Activated T-helper 2 cell treated with anti-CD3 and anti-CD28 coated beads, Interferon-gamma antibody, Interleukin-2, Interleukin-4, amounts not matched to agents 10 μg/mL and 5 μg/mL and 100 μg/mL, durations not matched to agents 14 hours and 24 hours and 36 hours (primary cell): ENCODE measurements at regions of chr3 and their contacts with region 1.

Region 1: GRCh38 chr3:119240591-119241434 is at the start of gene B4GALT4:
- DNase-seq: peak; percentile 74
- H3K4me3 Mint-ChIP-seq: peak within 1 kb of the TSS; percentile 84
- H3K27ac Mint-ChIP-seq: peak within 1 kb of the TSS; percentile 85
- H3K4me1 Mint-ChIP-seq: peaks cover 27% of the 10 kb centered on the region
- H3K27me3 Mint-ChIP-seq: no peaks in the 10 kb centered on the region
- total RNA-seq, gene B4GALT4: 17.2 and 20.1 TPM in 2 replicates

Region 2: GRCh38 chr3:119034256-119035013 is 206.4 kb before region 1 on chr3 and contains the start of gene IGSF11:
- intact Hi-C with region 1: loop called (anchors 2 kb)
- DNase-seq: peak; percentile 39
- H3K4me3 Mint-ChIP-seq: peak within 1 kb of the TSS; percentile 72
- H3K27ac Mint-ChIP-seq: no peak within 1 kb of the TSS
- H3K4me1 Mint-ChIP-seq: peaks cover 4% of the 10 kb centered on the region
- H3K27me3 Mint-ChIP-seq: peaks cover 59% of the 10 kb centered on the region
- total RNA-seq, gene IGSF11: 0.21 TPM in 1 of 2 replicates, not detected in the other

Region 3: GRCh38 chr3:119145500-119146191 is 95.2 kb before region 1 on chr3 and contains the start of gene TEX55:
- intact Hi-C with region 1: loop called (anchors 1 kb)
- DNase-seq: no peak
- H3K4me3 Mint-ChIP-seq: no peak within 1 kb of the TSS
- H3K27ac Mint-ChIP-seq: no peak within 1 kb of the TSS
- H3K4me1 Mint-ChIP-seq: no peaks in the 10 kb centered on the region
- H3K27me3 Mint-ChIP-seq: no peaks in the 10 kb centered on the region
- total RNA-seq, gene TEX55: not detected in 2 replicates

Region 4: DNA sequence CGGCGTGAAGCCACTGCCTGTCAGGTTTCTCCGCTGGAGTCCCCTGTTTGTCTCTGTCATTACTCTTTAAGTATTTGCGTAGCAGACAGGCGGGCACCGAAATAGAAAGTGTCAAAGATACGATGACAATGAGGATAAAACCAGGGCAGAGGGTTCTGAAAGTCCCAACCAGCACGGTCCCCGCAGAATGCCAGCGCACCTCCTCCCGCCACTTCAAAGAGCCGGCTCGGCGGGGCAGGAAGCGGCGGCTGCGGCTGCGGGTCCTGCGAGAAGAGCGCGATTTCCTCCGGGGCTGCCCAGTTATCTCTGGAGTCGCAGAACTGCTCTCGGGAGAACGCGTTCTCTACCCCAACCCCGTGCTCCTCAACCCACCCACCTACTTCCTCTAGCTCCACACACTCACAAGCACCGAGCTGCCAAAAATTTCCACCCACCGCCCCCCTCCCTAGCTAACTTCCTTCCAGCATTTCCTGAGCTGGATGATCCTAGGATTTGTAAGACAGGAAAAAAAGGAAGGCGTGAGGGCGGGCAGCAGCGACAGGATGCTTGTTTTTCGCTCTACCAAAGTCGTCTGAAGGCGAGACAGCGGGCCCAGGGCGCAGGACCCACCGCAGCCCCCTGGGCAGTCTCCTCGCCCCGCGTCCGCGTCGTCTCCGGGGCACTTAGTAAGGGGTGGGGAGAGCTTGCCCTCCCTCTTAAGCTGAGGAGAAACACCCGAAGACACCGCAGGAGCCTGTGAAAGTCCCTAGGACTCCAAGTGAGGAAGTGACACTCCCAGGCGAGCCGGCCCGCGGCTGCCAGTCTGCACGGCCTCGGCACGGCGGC is 53.3 kb after region 1 on chr3 and contains the start of gene ARHGAP31:
- intact Hi-C with region 1: loop called (anchors 2 kb)
- DNase-seq: peak; percentile 79
- H3K4me3 Mint-ChIP-seq: peak within 1 kb of the TSS; percentile 81
- H3K27ac Mint-ChIP-seq: peak within 1 kb of the TSS; percentile 86
- H3K4me1 Mint-ChIP-seq: peaks cover 51% of the 10 kb centered on the region
- H3K27me3 Mint-ChIP-seq: peaks cover 15% of the 10 kb centered on the region
- total RNA-seq, gene ARHGAP31: 13.2 and 14.0 TPM in 2 replicates

Region 5: GRCh38 chr3:119463171-119464169 is 222.7 kb after region 1 on chr3 and contains the start of gene TMEM39A:
- intact Hi-C with region 1: loop called (anchors 2 kb)
- DNase-seq: peak; percentile 98
- H3K4me3 Mint-ChIP-seq: peak within 1 kb of the TSS; percentile 95
- H3K27ac Mint-ChIP-seq: peak within 1 kb of the TSS; percentile 97
- H3K4me1 Mint-ChIP-seq: peaks cover 38% of the 10 kb centered on the region
- H3K27me3 Mint-ChIP-seq: no peaks in the 10 kb centered on the region
- total RNA-seq, gene TMEM39A: 50.4 and 58.4 TPM in 2 replicates

Region 6: DNA sequence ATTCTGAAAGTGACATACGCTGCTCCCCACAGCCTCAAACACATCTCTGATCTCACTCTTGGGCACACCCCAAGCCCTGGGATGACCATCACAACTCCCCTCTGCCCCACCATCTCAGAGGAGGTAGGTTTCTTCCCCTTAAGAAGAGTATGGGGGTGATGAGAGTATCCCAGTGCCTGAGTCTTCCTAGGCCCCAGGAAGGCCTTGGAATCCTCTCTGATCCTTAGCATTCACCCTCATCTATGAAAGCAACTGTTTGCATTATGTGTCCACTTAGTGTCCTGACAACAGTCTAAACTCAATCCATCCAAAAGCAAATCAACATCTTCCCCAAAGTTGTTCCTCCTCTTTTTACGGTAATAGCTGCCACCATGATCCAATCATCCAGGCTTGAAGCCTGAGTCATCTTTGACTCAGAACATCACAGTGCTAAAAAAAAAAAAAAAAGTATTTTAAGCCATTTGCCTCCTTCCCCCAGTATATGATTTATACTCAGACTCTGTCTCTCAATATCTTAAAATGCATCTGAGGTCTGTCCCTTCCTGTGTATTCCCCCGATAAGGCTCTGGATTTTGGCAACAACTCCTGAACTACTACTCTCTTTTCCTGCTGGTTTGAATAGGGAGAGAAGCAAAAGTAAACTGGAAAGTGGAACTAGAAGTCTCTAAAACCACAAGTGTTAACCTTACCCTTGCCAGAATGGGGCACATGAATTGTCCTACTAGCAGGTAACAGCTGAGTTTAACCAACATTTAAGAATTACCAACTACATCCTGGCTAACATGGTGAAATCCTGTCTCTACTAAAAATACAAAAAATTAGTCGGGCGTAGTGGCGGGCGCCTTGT is 397.1 kb after region 1 on chr3:
- intact Hi-C with region 1: loop called (anchors 1 kb)
- DNase-seq: no peak
- H3K4me3 Mint-ChIP-seq: peak overlapping the region; percentile 18
- H3K27ac Mint-ChIP-seq: peak overlapping the region; percentile 86
- H3K4me1 Mint-ChIP-seq: peaks cover 42% of the 10 kb centered on the region
- H3K27me3 Mint-ChIP-seq: peaks cover 1% of the 10 kb centered on the region

Region 7: GRCh38 chr3:119702530-119703157 is 461.8 kb after region 1 on chr3 and contains the start of gene CFAP91:
- intact Hi-C with region 1: loop called (anchors 1 kb)
- DNase-seq: peak; percentile 74
- H3K4me3 Mint-ChIP-seq: peak within 1 kb of the TSS; percentile 71
- H3K27ac Mint-ChIP-seq: no peak within 1 kb of the TSS
- H3K4me1 Mint-ChIP-seq: peaks cover 29% of the 10 kb centered on the region
- H3K27me3 Mint-ChIP-seq: peaks cover 26% of the 10 kb centered on the region
- total RNA-seq, gene CFAP91: not detected in 2 replicates

Region 8: GRCh38 chr3:120021523-120021922 is 780.7 kb after region 1 on chr3:
- intact Hi-C with region 1: no loop called
- DNase-seq: no peak
- H3K4me3 Mint-ChIP-seq: no peak overlapping the region
- H3K27ac Mint-ChIP-seq: no peak overlapping the region
- H3K4me1 Mint-ChIP-seq: peaks cover 34% of the 10 kb centered on the region
- H3K27me3 Mint-ChIP-seq: no peaks in the 10 kb centered on the region

Region 9: DNA sequence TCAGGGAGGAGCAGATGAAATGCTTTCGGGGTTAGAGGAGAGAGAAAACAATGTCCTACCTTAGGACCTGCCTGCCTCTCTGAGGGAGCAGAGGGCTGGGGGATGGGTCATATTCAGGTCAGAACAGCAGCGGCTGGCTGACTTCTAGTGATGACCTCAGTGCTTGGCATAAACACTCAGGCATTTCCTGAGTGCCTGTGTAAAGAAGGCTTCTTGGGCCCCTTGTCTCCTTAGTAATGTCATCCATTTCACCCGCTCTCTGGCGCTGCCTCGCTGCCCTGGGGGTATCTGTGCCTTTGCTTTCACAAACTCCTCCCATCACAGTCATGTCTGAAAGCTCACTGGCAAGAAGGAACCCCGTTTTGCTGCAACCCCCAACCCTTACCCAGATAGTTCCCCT is 936.3 kb after region 1 on chr3:
- intact Hi-C with region 1: no loop called
- DNase-seq: no peak
- H3K4me3 Mint-ChIP-seq: no peak overlapping the region
- H3K27ac Mint-ChIP-seq: no peak overlapping the region
- H3K4me1 Mint-ChIP-seq: no peaks in the 10 kb centered on the region
- H3K27me3 Mint-ChIP-seq: peaks cover 13% of the 10 kb centered on the region